Endothelial cell of umbilical vein (primary cell): ENCODE measurements at regions of chr5 and their contacts with region 1.

Region 1: GRCh38 chr5:71782771-71783770 is 64.0 kb downstream of the CARTPT start:
- DNase-seq: peak; percentile 74
- H3K4me3 ChIP-seq: no peak overlapping the region
- H3K27ac ChIP-seq: no peak overlapping the region
- H3K4me1 ChIP-seq: peaks cover 6% of the 10 kb centered on the region
- H3K27me3 ChIP-seq: peaks cover 17 to 23% of the 10 kb centered on the region in 2 experiments
- CTCF ChIP-seq: peak; percentile 77 to 79
- POLR2A ChIP-seq: no peak

Region 2: DNA sequence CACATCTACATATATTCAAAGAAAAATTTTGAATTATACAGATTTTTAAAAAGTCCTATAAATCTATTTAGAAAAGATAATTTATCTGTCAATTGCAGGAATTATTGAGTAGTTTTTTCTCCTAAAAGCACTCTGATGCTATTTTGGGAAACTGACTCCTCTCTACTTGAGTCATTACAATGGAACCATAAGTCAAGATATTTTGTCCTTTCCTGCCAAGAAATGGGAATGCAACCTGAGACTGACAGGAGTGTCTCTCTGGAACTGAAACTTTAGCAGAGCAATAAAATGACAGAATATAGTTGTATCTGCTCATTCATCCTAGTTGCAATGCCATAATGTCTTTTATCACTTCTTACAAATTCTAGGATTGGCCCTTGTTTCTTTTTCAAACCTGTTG is 15.4 kb before region 1 on chr5:
- CTCF ChIA-PET with region 1: interaction called, 14 read pairs
- POLR2A ChIA-PET with region 1: no interaction called
- dilution Hi-C with region 1: no loop called
- intact Hi-C with region 1: no loop called
- DNase-seq: no peak
- H3K4me3 ChIP-seq: no peak overlapping the region
- H3K27ac ChIP-seq: no peak overlapping the region
- H3K4me1 ChIP-seq: peaks cover 24% of the 10 kb centered on the region
- H3K27me3 ChIP-seq: peaks cover 0 to 8% of the 10 kb centered on the region in 2 experiments
- CTCF ChIP-seq: no peak
- POLR2A ChIP-seq: no peak

Region 3: GRCh38 chr5:72009280-72009679 is 226.2 kb after region 1 on chr5:
- CTCF ChIA-PET with region 1: interaction called, 16 read pairs
- POLR2A ChIA-PET with region 1: no interaction called
- dilution Hi-C with region 1: no loop called
- intact Hi-C with region 1: no loop called
- DNase-seq: no peak
- H3K4me3 ChIP-seq: no peak overlapping the region
- H3K27ac ChIP-seq: no peak overlapping the region
- H3K4me1 ChIP-seq: no peaks in the 10 kb centered on the region
- H3K27me3 ChIP-seq: peaks cover 28 to 62% of the 10 kb centered on the region in 2 experiments
- CTCF ChIP-seq: no peak
- POLR2A ChIP-seq: no peak

Region 4: GRCh38 chr5:72108202-72109061 is 325.4 kb after region 1 on chr5:
- CTCF ChIA-PET with region 1: interaction called, 9 read pairs
- POLR2A ChIA-PET with region 1: no interaction called
- dilution Hi-C with region 1: no loop called
- intact Hi-C with region 1: loop called (anchors 2 kb)
- DNase-seq: peak; percentile 81
- H3K4me3 ChIP-seq: peak overlapping the region; percentile 91 to 98 (median 97)
- H3K27ac ChIP-seq: peak overlapping the region; percentile 48
- H3K4me1 ChIP-seq: peaks cover 39% of the 10 kb centered on the region
- H3K27me3 ChIP-seq: no peaks in the 10 kb centered on the region
- CTCF ChIP-seq: no peak
- POLR2A ChIP-seq: peak; percentile 53

Region 5: GRCh38 chr5:72280581-72281170 is 497.6 kb after region 1 on chr5:
- CTCF ChIA-PET with region 1: interaction called, 16 read pairs
- POLR2A ChIA-PET with region 1: no interaction called
- dilution Hi-C with region 1: no loop called
- intact Hi-C with region 1: no loop called
- DNase-seq: peak; percentile 60
- H3K4me3 ChIP-seq: no peak overlapping the region
- H3K27ac ChIP-seq: no peak overlapping the region
- H3K4me1 ChIP-seq: peaks cover 18% of the 10 kb centered on the region
- H3K27me3 ChIP-seq: no peaks in the 10 kb centered on the region
- CTCF ChIP-seq: peak; percentile 32 to 51
- POLR2A ChIP-seq: no peak